Mammary epithelial cell (primary cell): ENCODE measurements at regions of chrX and their contacts with region 1.

Region 1: GRCh38 chrX:71652405-71652804 is 14.9 kb upstream of the LOC101059915 start:
- DNase-seq: peak; percentile 20
- H3K4me3 ChIP-seq: no peak overlapping the region
- H3K27ac ChIP-seq: no peak overlapping the region
- H3K4me1 ChIP-seq: no peaks in the 10 kb centered on the region
- H3K27me3 ChIP-seq: no peaks in the 10 kb centered on the region
- CTCF ChIP-seq: peak; percentile 61 to 65

Region 2: GRCh38 chrX:71525316-71525715 is 127.1 kb before region 1 on chrX:
- CTCF ChIA-PET with region 1: no interaction called
- dilution Hi-C with region 1: no loop called
- in situ Hi-C with region 1: no loop called
- intact Hi-C with region 1: no loop called
- DNase-seq: no peak
- H3K4me3 ChIP-seq: no peak overlapping the region
- H3K27ac ChIP-seq: no peak overlapping the region
- H3K4me1 ChIP-seq: no peaks in the 10 kb centered on the region
- H3K27me3 ChIP-seq: no peaks in the 10 kb centered on the region
- CTCF ChIP-seq: no peak

Region 3: DNA sequence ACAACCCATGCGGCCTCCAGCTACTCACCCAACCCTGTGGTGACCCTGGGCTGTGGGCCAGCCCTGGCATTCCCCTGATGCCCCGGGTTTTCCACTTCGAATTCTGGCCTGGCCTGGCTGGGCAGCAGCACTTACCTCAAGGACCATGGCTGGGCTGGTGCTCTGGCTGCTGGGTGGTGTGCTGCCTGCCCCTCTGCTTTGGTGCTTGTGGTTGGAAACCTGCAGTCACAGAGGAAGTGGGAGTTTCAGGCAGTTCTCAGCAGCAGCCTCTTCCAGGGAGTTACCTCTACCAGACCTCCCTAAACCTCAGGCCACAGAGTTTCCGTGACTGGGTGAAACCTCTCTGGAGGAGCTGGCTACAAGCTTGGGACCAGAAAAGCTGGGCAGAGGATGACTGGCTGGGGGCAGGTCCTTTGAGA is 34.1 kb before region 1 on chrX and contains the start of gene CXCR3:
- CTCF ChIA-PET with region 1: no interaction called
- dilution Hi-C with region 1: no loop called
- in situ Hi-C with region 1: no loop called
- intact Hi-C with region 1: loop called (anchors 5 kb)
- DNase-seq: no peak
- H3K4me3 ChIP-seq: no peak within 1 kb of the TSS
- H3K27ac ChIP-seq: no peak within 1 kb of the TSS
- H3K4me1 ChIP-seq: peaks cover 8% of the 10 kb centered on the region
- H3K27me3 ChIP-seq: no peaks in the 10 kb centered on the region
- CTCF ChIP-seq: no peak
- total RNA-seq, gene CXCR3: not detected